A673 (cell line): ENCODE measurements at regions of chr14 and their contacts with region 1.

Region 1: DNA sequence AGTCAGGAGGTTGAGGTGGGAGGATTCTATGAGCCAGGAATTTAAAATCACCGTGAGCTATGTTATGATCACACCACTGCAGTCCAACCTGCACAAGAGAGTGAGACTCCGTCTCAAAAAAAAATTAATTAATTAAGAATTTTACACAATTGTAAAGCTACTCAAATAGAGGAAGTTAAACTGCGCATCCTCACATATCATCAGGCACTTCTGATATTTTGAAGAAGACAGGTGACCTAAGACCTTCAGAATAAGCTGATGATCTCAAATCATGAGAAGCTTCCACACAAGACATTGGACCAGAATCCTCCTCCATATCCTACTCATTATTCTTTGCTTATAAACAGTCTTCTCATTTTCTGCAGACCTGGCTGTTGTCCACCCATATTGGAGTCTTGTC is 800.9 kb downstream of the TMEM121 start:
- DNase-seq: no peak
- H3K4me3 ChIP-seq: no peak overlapping the region
- H3K27ac ChIP-seq: no peak overlapping the region
- H3K4me1 ChIP-seq: no peaks in the 10 kb centered on the region
- H3K27me3 ChIP-seq: peaks cover 93% of the 10 kb centered on the region
- CTCF ChIP-seq: no peak

Region 2: GRCh38 chr14:106174206-106174605 is 153.0 kb before region 1 on chr14:
- CTCF ChIA-PET with region 1: no interaction called
- POLR2A ChIA-PET with region 1: no interaction called
- intact Hi-C with region 1: no loop called
- DNase-seq: no peak
- H3K4me3 ChIP-seq: no peak overlapping the region
- H3K27ac ChIP-seq: no peak overlapping the region
- H3K4me1 ChIP-seq: no peaks in the 10 kb centered on the region
- H3K27me3 ChIP-seq: peaks cover 41% of the 10 kb centered on the region
- CTCF ChIP-seq: no peak

Region 3: DNA sequence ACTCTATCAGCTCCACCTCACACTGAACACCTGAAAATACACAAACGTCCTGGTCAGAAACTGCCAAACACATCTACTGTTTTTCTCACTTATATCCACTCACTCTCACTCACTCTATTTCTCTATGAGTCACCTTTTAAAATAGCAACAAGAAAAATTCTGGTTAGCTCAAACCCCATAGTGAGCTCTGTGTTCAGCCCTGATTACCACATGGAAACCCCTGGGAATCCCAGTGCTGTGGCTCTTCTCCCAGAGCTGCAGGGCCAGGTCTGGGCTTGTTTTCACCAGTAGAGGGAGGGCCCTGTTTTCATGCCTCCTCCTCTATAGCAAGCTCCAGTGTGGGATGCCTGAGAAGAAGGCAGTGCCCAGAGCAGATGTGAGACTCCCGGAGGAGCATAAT is 325.3 kb after region 1 on chr14:
- CTCF ChIA-PET with region 1: interaction called, 11 read pairs
- POLR2A ChIA-PET with region 1: no interaction called
- intact Hi-C with region 1: no loop called
- DNase-seq: peak; percentile 52
- H3K4me3 ChIP-seq: no peak overlapping the region
- H3K27ac ChIP-seq: no peak overlapping the region
- H3K4me1 ChIP-seq: no peaks in the 10 kb centered on the region
- H3K27me3 ChIP-seq: no peaks in the 10 kb centered on the region
- CTCF ChIP-seq: peak; percentile 44; the same call in 1 of the 2 replicates